Ovary (tissue), 10 donors: ENCODE measurements at regions of chr13 and their contacts with region 1.

Region 1: GRCh38 chr13:27362064-27362883 is 62.1 kb upstream of the GTF3A start:
- DNase-seq: peak; percentile 77 to 88 (median 86)
- H3K4me3 ChIP-seq: peak overlapping the region; percentile 24
- H3K27ac ChIP-seq: no peak overlapping the region
- H3K4me1 ChIP-seq: no peaks in the 10 kb centered on the region
- H3K27me3 ChIP-seq: no peaks in the 10 kb centered on the region
- CTCF ChIP-seq: peak; percentile 80 to 91 (median 83)
- EP300 ChIP-seq: no peak
- POLR2A ChIP-seq: no peak

Region 2: DNA sequence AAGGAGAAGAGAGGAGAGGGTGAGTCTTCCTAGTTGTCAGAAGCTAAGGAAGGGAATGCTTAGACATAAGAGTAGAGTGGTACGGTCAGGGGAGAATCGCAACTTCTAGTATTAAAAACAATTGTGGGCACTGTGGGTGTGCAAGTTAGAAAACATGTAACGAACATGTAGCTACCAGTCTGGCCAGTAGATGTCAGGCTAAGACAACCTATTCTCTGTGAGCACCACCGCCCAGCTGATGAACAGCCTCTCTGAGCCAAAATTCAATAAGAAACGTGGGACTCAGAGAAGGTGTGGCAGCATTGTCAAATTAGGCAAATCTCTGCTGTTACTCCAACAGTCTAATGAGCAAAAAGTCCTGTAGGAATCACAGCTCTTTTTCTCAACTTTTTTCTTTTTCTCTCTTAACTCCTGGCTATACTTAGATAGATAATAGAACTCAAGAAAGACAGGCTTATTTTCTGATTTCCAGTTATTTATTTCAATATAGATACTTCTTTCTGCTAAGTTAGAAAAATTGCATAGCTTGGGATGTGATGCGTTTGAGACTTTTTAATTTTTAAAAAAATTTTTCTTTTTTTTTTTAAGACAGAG is 376.9 kb before region 1 on chr13:
- intact Hi-C with region 1: loop called (anchors 2 to 5 kb)
- DNase-seq: peak; percentile 41 to 82 (median 55)
- H3K4me3 ChIP-seq: no peak overlapping the region
- H3K27ac ChIP-seq: no peak overlapping the region
- H3K4me1 ChIP-seq: peaks cover 9% of the 10 kb centered on the region
- H3K27me3 ChIP-seq: no peaks in the 10 kb centered on the region
- CTCF ChIP-seq: peak; percentile 57 to 85 (median 71)
- EP300 ChIP-seq: no peak
- POLR2A ChIP-seq: no peak

Region 3: GRCh38 chr13:27504128-27504867 is 142.0 kb after region 1 on chr13:
- intact Hi-C with region 1: no loop called
- DNase-seq: no peak
- H3K4me3 ChIP-seq: no peak overlapping the region
- H3K27ac ChIP-seq: no peak overlapping the region
- H3K4me1 ChIP-seq: no peaks in the 10 kb centered on the region
- H3K27me3 ChIP-seq: no peaks in the 10 kb centered on the region
- CTCF ChIP-seq: no peak
- EP300 ChIP-seq: no peak
- POLR2A ChIP-seq: no peak

Region 4: GRCh38 chr13:27704681-27705080 is 342.4 kb after region 1 on chr13:
- intact Hi-C with region 1: no loop called
- DNase-seq: no peak
- H3K4me3 ChIP-seq: no peak overlapping the region
- H3K27ac ChIP-seq: no peak overlapping the region
- H3K4me1 ChIP-seq: no peaks in the 10 kb centered on the region
- H3K27me3 ChIP-seq: no peaks in the 10 kb centered on the region
- CTCF ChIP-seq: no peak
- EP300 ChIP-seq: no peak
- POLR2A ChIP-seq: no peak

Region 5: DNA sequence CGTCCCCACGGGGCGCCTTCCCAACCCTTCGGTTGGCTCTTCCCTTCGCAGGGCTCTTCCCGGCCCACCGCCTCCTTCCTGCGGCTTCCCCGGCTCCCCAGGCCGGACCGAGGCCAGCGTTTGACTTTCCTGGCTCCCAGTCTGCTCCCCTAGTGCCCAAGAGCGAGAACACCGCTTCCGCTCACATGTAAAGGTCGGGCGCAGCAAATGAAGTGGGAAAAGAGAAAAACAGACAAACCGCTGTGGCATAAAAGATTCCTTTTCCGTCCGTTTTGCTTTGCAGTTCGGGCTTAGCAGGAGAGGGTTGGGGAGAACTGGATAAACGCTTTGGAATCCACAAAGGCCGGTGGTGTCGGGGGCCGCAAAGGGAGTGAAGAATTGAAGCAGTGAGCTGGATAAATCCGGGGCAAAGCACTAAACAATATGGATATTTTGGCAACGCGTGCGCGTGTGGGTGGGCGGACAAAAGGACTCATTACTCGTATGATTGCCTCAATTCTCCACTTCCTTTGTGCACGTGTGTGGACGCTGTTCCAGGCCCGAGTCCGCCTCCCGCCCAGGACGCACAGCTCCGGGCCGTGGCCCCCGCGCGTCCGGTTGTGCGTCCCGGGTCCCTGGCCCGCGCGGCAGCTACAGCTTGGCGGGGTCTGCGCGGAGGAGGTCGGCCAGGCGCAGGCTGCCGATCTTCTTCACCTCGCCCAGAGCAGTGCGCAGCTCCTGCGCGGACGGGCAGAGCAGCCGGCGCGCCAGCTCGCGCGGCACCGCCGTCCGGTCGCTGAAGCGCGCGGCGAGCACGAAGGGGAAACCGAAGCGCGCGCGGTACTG is 615.4 kb after region 1 on chr13:
- intact Hi-C with region 1: loop called in 2 of 4 experiments (anchors 5 to 10 kb)
- DNase-seq: no peak
- H3K4me3 ChIP-seq: peak overlapping the region; percentile 8
- H3K27ac ChIP-seq: no peak overlapping the region
- H3K4me1 ChIP-seq: no peaks in the 10 kb centered on the region
- H3K27me3 ChIP-seq: no peaks in the 10 kb centered on the region
- CTCF ChIP-seq: no peak
- EP300 ChIP-seq: no peak
- POLR2A ChIP-seq: no peak